ENCODE measurements at regions of chr2 and their contacts with region 1.

Region 1: DNA sequence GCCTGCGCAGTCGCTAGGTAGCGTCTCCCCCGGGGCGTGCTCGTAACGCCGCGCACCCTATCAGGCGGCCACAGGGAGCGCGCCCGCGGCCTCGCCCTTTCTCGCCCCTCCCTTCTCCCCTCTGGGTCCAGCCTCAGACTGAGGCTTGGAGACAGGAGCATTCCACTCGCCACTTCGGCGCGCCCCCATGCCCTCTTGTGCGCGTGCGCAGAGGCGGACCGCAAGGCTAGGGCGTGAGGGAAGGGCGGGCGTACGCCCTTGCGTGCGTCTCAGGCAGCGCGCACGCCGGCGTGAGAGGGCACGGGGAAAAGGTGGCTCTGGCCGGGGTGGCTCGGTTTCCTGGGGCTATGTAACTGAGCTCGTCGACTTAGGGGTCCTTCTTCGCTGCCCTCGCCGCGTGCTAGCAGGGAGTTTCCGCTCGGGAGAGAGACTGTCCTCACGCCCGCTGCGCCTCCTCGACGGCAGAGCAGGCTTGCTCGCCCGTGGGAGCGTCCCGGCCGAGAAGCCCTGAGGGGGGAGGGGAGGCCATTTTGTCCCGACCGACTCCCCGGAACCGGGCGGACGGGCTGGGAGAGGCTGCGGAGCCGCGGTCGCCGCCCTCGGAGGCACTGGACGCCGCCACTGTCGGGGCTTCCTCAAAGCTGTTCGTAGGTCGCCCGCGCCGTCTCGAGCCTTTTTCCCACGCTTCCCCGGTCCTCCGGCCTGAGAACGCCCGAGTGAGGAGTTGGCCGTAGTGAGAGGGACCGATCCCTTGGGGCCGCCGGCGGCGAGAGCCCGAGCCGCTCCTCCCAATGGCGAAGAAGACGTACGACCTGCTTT is at the start of gene RAB10:
- DNase-seq: peak; percentile 100
- H3K4me3 Mint-ChIP-seq: peak within 1 kb of the TSS; percentile 93
- H3K27ac Mint-ChIP-seq: peak within 1 kb of the TSS; percentile 95
- H3K4me1 Mint-ChIP-seq: peaks cover 26% of the 10 kb centered on the region
- H3K27me3 Mint-ChIP-seq: peaks cover 1% of the 10 kb centered on the region
- total RNA-seq, gene RAB10: 133 and 141 TPM in 2 replicates

Region 2: GRCh38 chr2:26043862-26044696 is 10.1 kb after region 1 on chr2:
- intact Hi-C with region 1: loop called (anchors 1 kb)
- DNase-seq: no peak
- H3K4me3 Mint-ChIP-seq: peak overlapping the region; percentile 52
- H3K27ac Mint-ChIP-seq: peak overlapping the region; percentile 62
- H3K4me1 Mint-ChIP-seq: peaks cover 43% of the 10 kb centered on the region
- H3K27me3 Mint-ChIP-seq: no peaks in the 10 kb centered on the region

Region 3: GRCh38 chr2:26068602-26069298 is 34.7 kb after region 1 on chr2:
- intact Hi-C with region 1: loop called (anchors 1 kb)
- DNase-seq: peak; percentile 87
- H3K4me3 Mint-ChIP-seq: peak overlapping the region; percentile 58
- H3K27ac Mint-ChIP-seq: peak overlapping the region; percentile 89
- H3K4me1 Mint-ChIP-seq: peaks cover 46% of the 10 kb centered on the region
- H3K27me3 Mint-ChIP-seq: no peaks in the 10 kb centered on the region

Region 4: DNA sequence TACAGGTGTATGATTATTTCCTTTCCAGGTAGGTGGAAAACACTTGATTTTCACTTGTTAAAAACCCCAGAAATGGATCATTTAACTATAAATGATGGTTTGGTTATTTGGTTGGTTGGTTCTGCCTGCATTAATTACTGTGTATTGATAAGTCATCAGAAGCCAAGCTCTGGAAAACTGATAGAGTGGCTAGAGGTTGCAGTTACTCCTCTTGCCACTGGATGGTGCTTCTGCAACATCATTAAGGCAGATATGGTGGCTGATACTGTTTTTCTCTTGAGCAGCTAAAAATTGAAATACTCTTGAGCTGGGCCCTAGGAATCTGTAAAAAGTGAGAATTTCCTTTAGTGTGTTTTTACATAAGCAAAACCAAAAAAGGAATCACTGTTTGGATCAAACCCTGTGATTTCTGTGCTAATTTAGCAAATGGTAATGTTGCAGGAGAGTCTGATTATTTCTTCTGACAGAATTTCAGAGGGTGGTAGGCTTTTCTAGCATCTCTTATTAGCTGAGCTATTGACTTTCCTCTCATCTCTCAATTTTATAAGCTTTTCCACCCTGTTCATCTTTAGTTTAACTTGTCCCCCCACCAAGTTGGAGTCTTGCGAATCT is 54.1 kb after region 1 on chr2:
- intact Hi-C with region 1: loop called (anchors 2 kb)
- DNase-seq: peak; percentile 74
- H3K4me3 Mint-ChIP-seq: no peak overlapping the region
- H3K27ac Mint-ChIP-seq: no peak overlapping the region
- H3K4me1 Mint-ChIP-seq: peaks cover 50% of the 10 kb centered on the region
- H3K27me3 Mint-ChIP-seq: no peaks in the 10 kb centered on the region

Region 5: DNA sequence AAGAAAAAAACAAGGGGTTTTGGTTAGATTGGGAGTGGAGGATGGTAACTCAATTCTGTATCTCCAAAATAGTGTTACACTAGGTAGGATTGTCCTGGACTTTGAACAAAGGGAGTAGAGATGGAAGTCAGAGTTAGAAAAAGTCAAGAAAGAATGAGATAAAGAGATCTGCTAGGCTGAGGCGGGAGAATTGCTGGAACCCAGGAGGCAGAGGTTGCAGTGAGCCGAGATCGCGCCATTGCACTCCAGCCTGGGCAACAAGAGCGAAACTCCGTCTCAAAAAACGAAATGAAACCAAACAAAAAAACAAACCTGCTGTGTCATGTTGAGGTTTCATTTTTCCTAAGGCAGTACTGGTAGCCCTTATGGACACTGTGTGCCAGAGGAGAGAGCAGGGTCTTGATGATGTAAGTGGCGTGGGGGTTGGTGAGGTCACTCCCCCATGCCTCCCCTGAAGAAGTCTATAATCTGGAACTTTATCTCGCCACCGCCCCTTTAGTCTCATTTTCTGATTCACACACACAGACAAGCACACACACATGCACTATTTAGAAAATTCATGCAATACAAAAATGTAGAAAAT is 378.2 kb after region 1 on chr2:
- intact Hi-C with region 1: no loop called
- DNase-seq: peak; percentile 76
- H3K4me3 Mint-ChIP-seq: peak overlapping the region; percentile 65
- H3K27ac Mint-ChIP-seq: peak overlapping the region; percentile 26
- H3K4me1 Mint-ChIP-seq: peaks cover 14% of the 10 kb centered on the region
- H3K27me3 Mint-ChIP-seq: peaks cover 16% of the 10 kb centered on the region